ENCODE measurements at regions of chr19 and their contacts with region 1.

Region 1: GRCh38 chr19:29714953-29715700 is at the start of gene C19orf12:
- DNase-seq: peak; percentile 70
- ATAC-seq: peak; percentile 75
- H3K4me3 Mint-ChIP-seq: peak within 1 kb of the TSS; percentile 91
- H3K27ac Mint-ChIP-seq: peak within 1 kb of the TSS; percentile 95
- H3K4me1 Mint-ChIP-seq: peaks cover 50% of the 10 kb centered on the region
- H3K27me3 Mint-ChIP-seq: no peaks in the 10 kb centered on the region
- CTCF ChIP-seq: no peak
- total RNA-seq, gene C19orf12: 21.1 and 21.6 TPM in 2 replicates

Region 2: DNA sequence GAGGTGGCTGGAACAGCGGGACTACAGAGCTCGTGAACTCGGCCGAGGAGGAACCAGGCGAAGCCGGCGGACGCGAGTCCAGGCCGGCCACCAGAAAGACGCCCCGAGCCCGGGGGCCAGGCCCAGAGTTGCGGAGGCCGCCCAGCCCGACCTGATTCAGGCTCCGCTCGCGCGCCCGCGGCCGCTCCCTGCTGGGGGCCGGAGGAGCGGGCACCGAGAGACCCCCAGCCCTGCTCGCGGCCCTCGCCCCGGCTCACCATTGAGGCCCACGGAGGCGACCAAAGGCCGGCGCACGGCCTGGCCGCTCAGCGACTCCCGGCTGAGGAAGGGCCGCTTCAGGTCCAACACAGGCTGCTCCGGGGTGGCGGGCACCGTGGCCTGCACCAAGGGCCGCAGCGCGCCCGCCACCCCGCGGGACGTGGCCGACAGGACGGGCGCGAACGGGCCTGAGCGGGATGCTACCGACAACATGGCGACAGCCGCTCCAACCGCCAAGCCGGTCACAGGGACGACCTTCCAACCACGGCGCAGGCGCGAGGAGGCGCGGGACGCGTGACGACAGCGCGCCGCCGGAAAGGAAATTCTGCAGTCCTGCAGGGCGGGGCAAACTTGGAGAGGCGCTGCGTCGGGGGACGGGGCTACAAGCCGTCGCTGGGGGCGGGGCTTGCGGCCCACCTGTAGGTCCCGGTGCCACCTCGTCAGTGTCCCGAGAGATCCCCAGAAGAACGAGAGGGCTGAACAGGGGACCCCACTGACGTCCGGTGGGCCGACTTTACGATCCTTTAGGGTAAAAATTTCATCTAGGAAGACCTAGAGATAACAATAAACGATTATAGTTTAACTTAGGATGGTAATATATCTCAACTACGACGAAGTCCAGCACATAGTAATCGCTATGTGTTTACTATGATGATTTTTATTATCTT is 502.2 kb before region 1 on chr19 and contains the start of gene UQCRFS1:
- CTCF ChIA-PET with region 1: no interaction called
- POLR2A ChIA-PET with region 1: no interaction called
- intact Hi-C with region 1: loop called (anchors 10 kb)
- DNase-seq: peak; percentile 92
- ATAC-seq: peak; percentile 96
- H3K4me3 Mint-ChIP-seq: peak within 1 kb of the TSS; percentile 92
- H3K27ac Mint-ChIP-seq: peak within 1 kb of the TSS; percentile 88
- H3K4me1 Mint-ChIP-seq: peaks cover 38% of the 10 kb centered on the region
- H3K27me3 Mint-ChIP-seq: peaks cover 9% of the 10 kb centered on the region
- CTCF ChIP-seq: no peak
- total RNA-seq, gene UQCRFS1: 22.9 and 24.4 TPM in 2 replicates

Region 3: DNA sequence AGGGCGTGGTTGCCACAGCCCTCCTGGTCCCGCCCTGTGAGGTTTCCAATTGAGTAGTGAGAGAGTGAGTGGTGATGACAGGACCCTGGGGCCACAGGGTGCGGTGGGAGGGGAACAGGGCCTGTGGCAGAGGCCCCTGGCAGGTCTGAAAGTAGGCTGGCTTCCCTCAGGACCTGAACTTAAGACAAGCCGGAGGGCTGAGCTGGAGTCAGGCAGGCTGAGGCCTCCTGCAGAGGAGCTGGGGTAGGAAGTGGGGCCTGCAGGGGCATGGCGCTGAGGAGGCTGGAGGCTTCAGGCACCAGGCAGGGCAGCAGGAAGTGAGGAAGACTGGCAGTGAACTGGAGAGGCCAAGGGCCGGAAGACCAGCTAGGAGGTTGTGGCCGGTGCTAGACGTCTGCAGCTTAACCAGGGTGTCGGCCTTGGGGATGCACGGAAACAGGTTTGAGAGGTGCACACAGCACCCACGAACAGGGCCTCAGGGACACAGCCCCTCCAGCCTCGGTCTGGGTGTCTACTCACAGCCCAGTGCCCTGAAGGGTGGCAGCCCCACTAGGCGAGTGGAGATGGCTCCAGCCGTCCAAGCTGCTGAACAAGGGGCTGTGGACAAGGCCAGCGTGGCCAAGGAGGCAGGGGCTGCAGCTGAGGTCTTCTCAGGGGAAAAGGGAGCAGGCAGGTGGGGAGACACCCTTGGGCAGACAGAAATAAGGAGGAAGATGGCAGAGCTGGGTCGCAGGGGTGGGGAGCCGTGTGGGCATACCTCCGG is 91.2 kb before region 1 on chr19:
- CTCF ChIA-PET with region 1: no interaction called
- POLR2A ChIA-PET with region 1: no interaction called
- intact Hi-C with region 1: no loop called
- DNase-seq: no peak
- ATAC-seq: no peak
- H3K4me3 Mint-ChIP-seq: no peak overlapping the region
- H3K27ac Mint-ChIP-seq: no peak overlapping the region
- H3K4me1 Mint-ChIP-seq: peaks cover 12% of the 10 kb centered on the region
- H3K27me3 Mint-ChIP-seq: peaks cover 9% of the 10 kb centered on the region
- CTCF ChIP-seq: no peak

Region 4: GRCh38 chr19:29665215-29665825 is 49.8 kb before region 1 on chr19 and contains the start of gene PLEKHF1:
- CTCF ChIA-PET with region 1: interaction called, 27 read pairs
- POLR2A ChIA-PET with region 1: interaction called, 23 read pairs
- intact Hi-C with region 1: loop called (anchors 1 kb)
- DNase-seq: peak; percentile 94
- ATAC-seq: peak; percentile 95
- H3K4me3 Mint-ChIP-seq: peak within 1 kb of the TSS; percentile 79
- H3K27ac Mint-ChIP-seq: peak within 1 kb of the TSS; percentile 68
- H3K4me1 Mint-ChIP-seq: peaks cover 38% of the 10 kb centered on the region
- H3K27me3 Mint-ChIP-seq: no peaks in the 10 kb centered on the region
- CTCF ChIP-seq: no peak
- total RNA-seq, gene PLEKHF1: 5.5 and 5.8 TPM in 2 replicates

Region 5: DNA sequence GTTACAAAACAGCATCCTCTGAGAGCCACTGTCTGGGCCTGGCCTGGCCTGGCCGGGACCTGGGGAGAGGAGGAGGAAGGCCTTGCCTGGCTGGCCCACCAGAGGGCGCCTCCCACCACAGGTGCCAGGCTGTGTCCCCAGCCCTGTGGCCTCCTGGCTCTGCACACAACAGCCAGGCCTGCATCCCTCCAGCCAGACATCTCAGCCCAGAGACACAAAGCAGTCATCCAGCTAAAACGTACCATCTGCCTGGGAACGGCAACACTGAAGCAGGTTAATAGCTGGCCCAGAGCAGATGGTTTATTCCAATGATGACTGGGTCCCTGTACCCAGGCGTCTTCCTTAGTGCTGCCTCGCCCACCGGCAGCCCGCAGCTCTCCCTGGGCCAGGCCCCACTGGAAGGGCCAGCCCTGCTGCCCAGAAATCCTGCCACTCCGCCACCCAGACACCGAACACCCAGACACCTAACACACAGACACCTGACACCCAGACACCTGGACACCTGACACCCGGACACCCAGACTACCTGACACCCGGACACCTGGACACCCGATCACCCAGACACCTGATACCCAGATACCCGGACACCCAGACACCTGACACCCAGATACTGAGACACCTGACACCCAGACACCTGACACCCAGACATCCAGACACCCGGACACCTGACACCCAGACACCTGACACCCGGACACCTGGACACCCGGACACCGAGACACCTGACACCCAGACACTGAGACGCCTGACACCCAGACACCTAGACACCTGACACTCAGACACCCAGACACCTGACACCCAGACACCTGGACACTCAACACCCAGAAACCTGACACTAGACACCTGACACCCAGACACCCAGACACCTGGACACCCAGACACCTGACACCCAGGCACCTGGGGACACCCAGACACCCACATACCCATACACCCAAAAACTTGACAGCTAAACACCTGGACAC is 20.2 kb before region 1 on chr19:
- CTCF ChIA-PET with region 1: interaction called, 22 read pairs
- POLR2A ChIA-PET with region 1: interaction called, 7 read pairs
- intact Hi-C with region 1: loop called (anchors 1 kb)
- DNase-seq: peak; percentile 69
- ATAC-seq: peak; percentile 96
- H3K4me3 Mint-ChIP-seq: no peak overlapping the region
- H3K27ac Mint-ChIP-seq: no peak overlapping the region
- H3K4me1 Mint-ChIP-seq: peaks cover 19% of the 10 kb centered on the region
- H3K27me3 Mint-ChIP-seq: no peaks in the 10 kb centered on the region
- CTCF ChIP-seq: peak; percentile 76

Region 6: DNA sequence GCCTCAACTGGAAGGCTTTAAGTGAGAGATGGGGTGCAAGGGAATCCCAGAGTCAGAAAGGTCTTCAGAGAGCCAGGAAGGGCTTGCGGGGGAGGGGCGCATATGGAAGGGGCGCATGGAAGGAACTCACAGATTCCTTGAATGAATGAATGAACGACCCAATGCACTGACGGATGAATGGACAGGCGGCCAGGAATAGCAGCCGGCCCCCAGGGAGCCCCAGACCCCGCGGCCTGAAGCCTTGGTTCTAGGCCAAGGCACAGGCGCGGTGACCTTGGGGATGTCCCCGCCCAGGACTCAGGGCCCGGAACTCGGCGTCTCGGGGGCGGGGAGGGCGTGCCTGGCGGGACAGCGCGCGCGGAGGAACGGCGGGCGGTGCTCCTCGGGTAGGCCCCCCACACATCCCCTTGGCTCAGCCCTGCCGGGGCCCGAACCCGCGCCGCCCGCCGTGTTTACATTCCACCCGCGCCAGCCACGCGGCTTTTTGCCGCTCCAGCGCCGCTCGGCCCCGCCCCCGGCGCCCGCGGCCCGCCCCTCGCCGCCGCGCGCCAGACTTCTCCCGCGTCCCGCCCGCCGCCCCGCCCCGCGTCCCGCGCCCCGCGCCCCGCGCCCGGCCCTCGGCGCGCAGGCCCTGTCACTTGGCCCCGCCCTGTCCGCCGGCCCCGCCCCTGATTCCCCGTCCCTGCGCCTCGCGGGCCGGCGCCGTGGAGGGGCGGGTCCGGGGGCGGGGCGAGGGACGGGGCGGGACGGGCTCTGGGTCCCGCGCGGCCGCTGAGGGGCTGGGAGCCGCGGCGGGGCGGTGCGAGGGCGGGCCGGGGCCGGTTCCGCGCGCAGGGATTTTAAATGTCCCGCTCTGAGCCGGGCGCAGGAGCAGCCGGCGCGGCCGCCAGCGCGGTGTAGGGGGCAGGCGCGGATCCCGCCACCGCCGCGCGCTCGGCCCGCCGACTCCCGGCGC is 96.3 kb after region 1 on chr19 and contains the start of gene CCNE1:
- CTCF ChIA-PET with region 1: interaction called, 3 read pairs
- POLR2A ChIA-PET with region 1: no interaction called
- intact Hi-C with region 1: loop called (anchors 10 kb)
- DNase-seq: peak; percentile 95
- ATAC-seq: peak; percentile 94
- H3K4me3 Mint-ChIP-seq: peak within 1 kb of the TSS; percentile 85
- H3K27ac Mint-ChIP-seq: peak within 1 kb of the TSS; percentile 77
- H3K4me1 Mint-ChIP-seq: peaks cover 18% of the 10 kb centered on the region
- H3K27me3 Mint-ChIP-seq: no peaks in the 10 kb centered on the region
- CTCF ChIP-seq: no peak
- total RNA-seq, gene CCNE1: 3.4 and 4.1 TPM in 2 replicates

Region 7: DNA sequence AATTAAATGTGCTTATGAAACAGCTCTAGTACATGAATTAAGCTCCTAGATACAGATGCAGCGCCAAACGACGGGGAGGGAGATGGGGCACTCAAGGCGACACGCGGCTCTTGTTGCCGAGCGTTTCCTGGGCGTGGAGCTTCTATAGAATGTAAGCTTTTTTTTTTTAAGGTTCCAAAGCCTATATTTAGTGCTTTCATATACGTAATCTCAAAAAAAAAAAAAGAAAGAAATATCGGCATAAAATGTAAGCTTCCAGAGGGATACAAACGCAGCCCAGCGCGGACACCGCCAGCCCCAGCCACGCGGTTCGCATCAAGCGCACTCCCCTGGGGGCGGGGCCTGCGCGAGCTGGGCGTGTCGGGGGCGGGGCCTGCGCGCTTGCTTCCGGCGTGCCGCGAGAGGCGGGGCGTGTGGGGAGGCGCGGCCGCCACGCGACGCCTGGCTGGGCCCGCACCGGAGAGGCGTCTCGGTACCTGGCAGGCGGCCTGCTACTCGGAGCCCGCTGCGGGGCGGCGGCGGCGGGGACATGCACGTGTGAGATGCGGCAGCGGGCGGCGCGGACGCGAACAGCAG is 226.8 kb after region 1 on chr19 and contains the start of gene URI1:
- CTCF ChIA-PET with region 1: no interaction called
- POLR2A ChIA-PET with region 1: interaction called, 14 read pairs
- intact Hi-C with region 1: loop called (anchors 5 kb)
- DNase-seq: peak; percentile 99
- ATAC-seq: peak; percentile 91
- H3K4me3 Mint-ChIP-seq: peak within 1 kb of the TSS; percentile 96
- H3K27ac Mint-ChIP-seq: peak within 1 kb of the TSS; percentile 92
- H3K4me1 Mint-ChIP-seq: peaks cover 36% of the 10 kb centered on the region
- H3K27me3 Mint-ChIP-seq: peaks cover 7% of the 10 kb centered on the region
- CTCF ChIP-seq: no peak
- total RNA-seq, gene URI1: 49.8 and 50.6 TPM in 2 replicates